ENCODE measurements at regions of chr11 and their contacts with region 1.

Region 1: DNA sequence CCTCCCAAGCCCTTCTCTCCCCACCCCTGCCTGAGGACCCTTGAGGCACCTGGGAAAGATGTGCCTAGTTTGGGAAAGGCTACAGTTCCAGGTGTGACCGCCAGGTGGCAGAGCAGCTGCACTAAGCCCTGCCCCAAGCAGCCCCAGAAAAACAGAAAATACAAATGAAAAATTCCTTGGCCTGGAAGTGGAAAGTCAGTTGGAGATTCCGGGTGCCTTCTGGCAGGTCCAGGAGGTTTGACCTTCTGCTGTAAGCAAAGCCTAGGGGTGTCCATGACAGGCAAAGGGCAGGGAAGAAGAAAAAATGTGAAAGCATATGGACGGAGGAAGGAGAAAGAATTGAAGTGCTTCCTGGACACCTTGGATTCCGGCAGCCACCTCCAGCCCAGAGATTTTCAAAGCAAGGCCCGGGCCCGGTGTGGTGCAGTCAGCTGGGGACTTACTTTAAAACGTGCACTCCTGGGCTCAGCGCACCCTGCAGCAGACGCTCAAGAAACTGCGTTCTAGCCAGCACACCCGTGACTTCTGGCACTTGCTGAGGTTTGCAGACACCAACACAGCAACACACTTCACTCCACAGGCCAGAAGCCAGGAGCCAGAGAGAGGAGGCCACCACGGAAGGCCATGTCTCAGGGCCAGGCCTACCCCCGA is 37.3 kb upstream of the SLC22A12 start:
- DNase-seq: peak; percentile 60 to 83 (median 76)
- H3K4me3 ChIP-seq: no peak overlapping the region
- H3K27ac ChIP-seq: peak overlapping the region; percentile 11 to 88 (median 72)
- H3K27me3 ChIP-seq: no peaks in the 10 kb centered on the region
- CTCF ChIP-seq: peak; percentile 96 to 100 (median 99)

Region 2: GRCh38 chr11:64688534-64688982 is 134.9 kb after region 1 on chr11:
- intact Hi-C with region 1: loop called in 1 of 2 experiments (anchors 1 kb)
- DNase-seq: peak; percentile 87 to 95 (median 92)
- H3K4me3 ChIP-seq: peak overlapping the region; percentile 16 to 70 (median 51)
- H3K27ac ChIP-seq: peak overlapping the region; percentile 71 to 100 (median 97)
- H3K27me3 ChIP-seq: no peaks in the 10 kb centered on the region
- CTCF ChIP-seq: peak; percentile 88 to 99 (median 97)

Region 3: GRCh38 chr11:64723117-64723906 is 169.6 kb after region 1 on chr11 and contains the start of gene NRXN2:
- intact Hi-C with region 1: loop called in 1 of 2 experiments (anchors 1 kb)
- DNase-seq: peak; percentile 91 to 98 (median 96)
- H3K4me3 ChIP-seq: peak within 1 kb of the TSS; percentile 61 to 99 (median 83)
- H3K27ac ChIP-seq: peak within 1 kb of the TSS in 58 of 59 donors; percentile 69 to 99 (median 92)
- H3K27me3 ChIP-seq: no peaks in the 10 kb centered on the region
- CTCF ChIP-seq: peak; percentile 79 to 99 (median 96)
- total RNA-seq, gene NRXN2: 116 to 339 (median 247) TPM